ENCODE measurements at regions of chr2 and their contacts with region 1.

Region 1: DNA sequence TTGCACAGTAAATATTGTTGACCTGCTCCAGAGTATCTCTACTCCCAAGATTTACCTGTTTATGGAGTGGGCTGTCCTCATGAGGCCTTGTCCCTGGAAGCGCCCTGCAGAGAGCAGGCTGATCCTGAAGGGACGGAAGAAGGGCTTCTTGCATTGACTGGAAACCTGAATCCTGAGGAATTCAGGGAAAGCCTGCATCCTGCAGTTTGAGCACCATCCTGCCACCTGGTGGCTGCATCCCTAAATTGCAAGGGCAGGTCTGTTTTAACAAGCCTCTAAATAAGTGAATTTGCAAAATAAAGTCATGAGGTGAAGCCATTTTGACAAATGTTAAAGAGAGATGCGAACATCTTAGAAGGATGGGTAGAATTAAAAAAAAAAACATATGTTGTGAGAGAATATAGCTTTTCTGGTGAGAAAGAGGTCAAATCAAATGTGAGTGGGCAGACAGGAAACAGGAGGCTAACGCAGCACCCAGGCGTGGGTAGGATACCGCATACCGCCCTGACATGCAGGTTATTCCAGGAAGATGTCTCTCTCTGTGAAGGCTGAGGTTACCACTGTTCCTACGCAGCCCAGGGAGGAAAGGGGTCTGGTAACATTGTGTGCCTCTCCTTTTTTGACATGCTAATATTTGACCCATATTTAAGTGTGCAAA is 754.9 kb downstream of the RNF144A start:
- DNase-seq: peak in 8 of 9 donors; percentile 17 to 69 (median 47)
- ATAC-seq: peak; percentile 61
- H3K4me3 ChIP-seq: no peak overlapping the region
- H3K4me3 Mint-ChIP-seq: peak overlapping the region; percentile 16 to 84 (median 69)
- H3K27ac ChIP-seq: no peak overlapping the region
- H3K27ac Mint-ChIP-seq: peak overlapping the region; percentile 77 to 91 (median 87)
- H3K4me1 ChIP-seq: peaks cover 9 to 19% of the 10 kb centered on the region in 2 donors
- H3K4me1 Mint-ChIP-seq: peaks cover 24 to 59% (median 40%) of the 10 kb centered on the region in 7 donors
- H3K27me3 ChIP-seq: no peaks in the 10 kb centered on the region
- H3K27me3 Mint-ChIP-seq: no peaks in the 10 kb centered on the region

Region 2: GRCh38 chr2:7593360-7593759 is 78.8 kb before region 1 on chr2:
- CTCF ChIA-PET with region 1: interaction called, 3 read pairs
- POLR2A ChIA-PET with region 1: no interaction called
- intact Hi-C with region 1: loop called in 1 of 2 experiments (anchors 5 kb)
- DNase-seq: no peak
- ATAC-seq: no peak
- H3K4me3 ChIP-seq: no peak overlapping the region
- H3K4me3 Mint-ChIP-seq: no peak overlapping the region
- H3K27ac ChIP-seq: no peak overlapping the region
- H3K27ac Mint-ChIP-seq: peak overlapping the region in 1 of 9 donors; percentile 57
- H3K4me1 ChIP-seq: no peaks in the 10 kb centered on the region
- H3K4me1 Mint-ChIP-seq: peaks cover 2 to 21% (median 11%) of the 10 kb centered on the region in 7 donors
- H3K27me3 ChIP-seq: no peaks in the 10 kb centered on the region
- H3K27me3 Mint-ChIP-seq: peaks cover 0 to 4% (median 0%) of the 10 kb centered on the region in 5 donors

Region 3: GRCh38 chr2:7649461-7650228 is 22.5 kb before region 1 on chr2:
- CTCF ChIA-PET with region 1: no interaction called
- POLR2A ChIA-PET with region 1: no interaction called
- intact Hi-C with region 1: loop called in 1 of 2 experiments (anchors 2 kb)
- DNase-seq: peak in 6 of 9 donors; percentile 27 to 52 (median 44)
- ATAC-seq: peak; percentile 72
- H3K4me3 ChIP-seq: no peak overlapping the region
- H3K4me3 Mint-ChIP-seq: peak overlapping the region; percentile 3 to 61 (median 44)
- H3K27ac ChIP-seq: no peak overlapping the region
- H3K27ac Mint-ChIP-seq: peak overlapping the region; percentile 12 to 94 (median 82)
- H3K4me1 ChIP-seq: peaks cover 9 to 15% of the 10 kb centered on the region in 2 donors
- H3K4me1 Mint-ChIP-seq: peaks cover 10 to 54% (median 36%) of the 10 kb centered on the region in 7 donors
- H3K27me3 ChIP-seq: no peaks in the 10 kb centered on the region
- H3K27me3 Mint-ChIP-seq: no peaks in the 10 kb centered on the region

Measured in naive thymus-derived CD4-positive, alpha-beta T cell (primary cell).